GM10248 (cell line): ENCODE measurements at regions of chr5 and their contacts with region 1.

Region 1: DNA sequence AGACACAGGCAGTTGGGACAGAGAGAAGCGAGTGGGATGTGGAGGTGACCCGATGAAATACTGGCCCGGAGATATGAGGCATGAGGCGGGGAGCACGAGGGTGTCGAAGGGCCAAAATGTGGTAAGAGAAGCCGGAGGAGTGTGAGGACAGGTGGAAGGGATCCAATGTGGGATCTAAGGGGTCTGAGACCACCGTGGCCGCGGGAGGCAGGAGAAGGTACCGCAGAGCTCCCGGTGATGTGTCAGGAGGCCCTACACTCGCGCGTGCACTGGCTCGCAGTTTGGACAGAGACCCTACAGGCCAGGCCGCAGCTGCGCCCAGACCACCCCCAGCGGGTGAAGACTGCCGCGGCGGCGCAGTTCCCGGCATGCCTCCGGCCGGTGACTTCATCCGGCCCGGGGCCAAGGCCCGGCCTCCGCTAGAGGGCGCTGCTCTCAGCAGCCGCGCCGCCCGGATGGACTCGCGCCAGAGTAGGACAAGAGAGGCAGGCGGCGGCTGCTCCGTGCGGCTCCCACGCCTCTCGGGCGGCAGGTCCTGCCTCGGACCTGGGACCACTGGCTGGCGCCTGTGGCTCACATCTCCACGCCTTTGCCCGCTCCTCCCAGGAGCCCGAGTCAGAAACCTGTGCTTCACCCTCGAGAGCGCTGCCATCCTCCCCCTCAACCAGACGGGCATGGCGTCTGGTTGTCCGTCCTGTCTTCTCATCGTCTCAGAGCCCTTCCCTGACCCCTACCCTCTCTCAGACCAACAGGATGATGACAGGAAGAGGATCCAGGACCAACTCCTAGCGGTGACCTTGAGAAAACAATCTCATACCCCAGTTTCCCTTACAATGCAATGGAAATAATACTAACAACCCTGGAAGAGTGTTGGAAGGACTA is 35.4 kb upstream of the STING1 start:
- DNase-seq: peak; percentile 95
- CTCF ChIP-seq: peak; percentile 97

Region 2: DNA sequence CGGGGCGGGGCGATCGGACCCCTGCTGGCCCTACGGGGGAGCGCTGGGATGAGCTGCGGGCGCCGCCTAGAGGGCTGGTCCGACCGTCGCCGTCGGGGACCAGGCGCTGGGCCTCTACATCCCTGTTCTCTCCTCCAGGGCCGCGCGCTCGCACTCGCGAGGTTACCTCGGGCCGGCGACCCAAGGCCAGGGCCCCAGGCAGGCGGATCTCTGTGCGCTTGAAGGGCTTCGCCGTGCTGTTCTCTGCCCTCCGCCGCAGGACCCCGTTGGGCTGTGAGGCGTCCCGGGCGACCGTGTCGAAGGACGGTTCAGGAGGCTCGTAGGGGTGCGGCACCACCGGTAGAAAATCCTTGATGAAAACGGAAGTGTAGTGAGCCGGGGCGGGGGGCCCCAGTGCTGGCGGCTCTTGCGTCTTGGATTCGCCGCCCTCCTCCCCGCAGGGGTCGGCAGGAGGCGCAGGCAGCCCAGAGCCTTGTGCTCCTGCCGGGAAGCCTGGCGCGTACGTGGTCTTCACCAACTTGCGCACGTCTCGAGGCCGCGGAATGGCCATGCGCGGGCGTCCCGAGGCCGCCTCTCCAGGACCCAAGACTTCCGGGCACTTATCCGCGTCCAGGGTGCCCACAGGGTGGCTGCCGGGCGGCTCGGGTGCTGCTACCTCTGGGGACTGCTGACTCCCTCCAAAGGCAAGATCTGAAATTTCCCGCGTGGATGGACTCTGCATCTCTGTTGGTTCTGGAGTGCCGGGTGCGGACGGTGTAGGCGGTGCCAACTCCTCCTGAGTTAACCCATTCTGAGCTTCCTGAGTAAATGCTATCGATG is 125.0 kb before region 1 on chr5:
- CTCF ChIA-PET with region 1: interaction called, 10 read pairs
- POLR2A ChIA-PET with region 1: no interaction called
- DNase-seq: peak; percentile 88
- CTCF ChIP-seq: peak; percentile 94

Region 3: DNA sequence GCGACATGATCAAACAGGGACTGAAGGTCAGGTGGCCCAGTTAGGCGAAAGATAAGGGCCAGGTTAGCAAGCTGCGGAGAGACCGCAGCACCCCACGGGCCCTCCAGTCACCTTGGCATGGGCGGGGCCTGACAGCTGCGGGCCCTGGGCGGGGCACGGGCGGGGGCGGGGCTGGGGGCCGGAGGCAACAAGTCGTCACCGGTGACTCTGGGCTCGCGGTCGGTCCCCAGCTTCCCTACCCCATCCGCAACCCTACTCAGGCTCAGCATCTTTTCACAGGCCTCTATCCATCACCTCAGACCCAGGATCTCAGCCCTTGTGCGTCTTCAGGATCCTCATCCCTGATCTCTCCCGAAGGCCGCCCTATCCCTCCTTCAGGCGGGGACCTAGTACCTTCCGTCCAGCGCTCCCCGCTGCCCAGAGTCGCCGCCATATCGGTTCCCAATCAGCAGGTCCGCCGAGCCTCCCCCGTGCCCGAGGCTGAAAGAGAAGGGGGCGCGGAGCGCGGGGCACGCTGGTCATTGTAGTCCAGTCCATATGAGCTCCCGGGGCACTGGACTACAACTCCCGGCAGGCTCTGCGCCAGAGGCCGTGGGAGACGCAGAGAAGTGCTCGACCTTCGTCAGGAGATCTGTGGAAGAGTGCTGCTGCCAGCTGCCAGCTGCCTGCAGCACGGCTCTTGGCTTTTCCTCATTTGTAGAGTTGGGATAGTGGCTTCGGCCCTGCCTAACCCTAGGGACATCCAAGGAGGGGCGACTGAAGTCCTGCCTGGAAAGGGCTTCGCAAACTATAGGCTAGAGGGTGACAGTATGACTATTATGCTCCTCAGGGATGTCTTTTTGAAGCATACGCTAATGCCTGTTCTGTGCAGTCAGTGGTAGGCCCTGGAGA is 78.7 kb before region 1 on chr5 and contains the start of gene DNAJC18:
- CTCF ChIA-PET with region 1: interaction called, 49 read pairs
- POLR2A ChIA-PET with region 1: no interaction called
- DNase-seq: peak; percentile 94
- CTCF ChIP-seq: no peak

Region 4: GRCh38 chr5:139482050-139482889 is 35.7 kb before region 1 on chr5 and contains the start of gene STING1:
- CTCF ChIA-PET with region 1: interaction called, 25 read pairs
- POLR2A ChIA-PET with region 1: no interaction called
- DNase-seq: peak; percentile 66
- CTCF ChIP-seq: no peak

Region 5: GRCh38 chr5:139501381-139501780 is 16.5 kb before region 1 on chr5:
- CTCF ChIA-PET with region 1: interaction called, 30 read pairs
- POLR2A ChIA-PET with region 1: no interaction called
- DNase-seq: no peak
- CTCF ChIP-seq: no peak

Region 6: DNA sequence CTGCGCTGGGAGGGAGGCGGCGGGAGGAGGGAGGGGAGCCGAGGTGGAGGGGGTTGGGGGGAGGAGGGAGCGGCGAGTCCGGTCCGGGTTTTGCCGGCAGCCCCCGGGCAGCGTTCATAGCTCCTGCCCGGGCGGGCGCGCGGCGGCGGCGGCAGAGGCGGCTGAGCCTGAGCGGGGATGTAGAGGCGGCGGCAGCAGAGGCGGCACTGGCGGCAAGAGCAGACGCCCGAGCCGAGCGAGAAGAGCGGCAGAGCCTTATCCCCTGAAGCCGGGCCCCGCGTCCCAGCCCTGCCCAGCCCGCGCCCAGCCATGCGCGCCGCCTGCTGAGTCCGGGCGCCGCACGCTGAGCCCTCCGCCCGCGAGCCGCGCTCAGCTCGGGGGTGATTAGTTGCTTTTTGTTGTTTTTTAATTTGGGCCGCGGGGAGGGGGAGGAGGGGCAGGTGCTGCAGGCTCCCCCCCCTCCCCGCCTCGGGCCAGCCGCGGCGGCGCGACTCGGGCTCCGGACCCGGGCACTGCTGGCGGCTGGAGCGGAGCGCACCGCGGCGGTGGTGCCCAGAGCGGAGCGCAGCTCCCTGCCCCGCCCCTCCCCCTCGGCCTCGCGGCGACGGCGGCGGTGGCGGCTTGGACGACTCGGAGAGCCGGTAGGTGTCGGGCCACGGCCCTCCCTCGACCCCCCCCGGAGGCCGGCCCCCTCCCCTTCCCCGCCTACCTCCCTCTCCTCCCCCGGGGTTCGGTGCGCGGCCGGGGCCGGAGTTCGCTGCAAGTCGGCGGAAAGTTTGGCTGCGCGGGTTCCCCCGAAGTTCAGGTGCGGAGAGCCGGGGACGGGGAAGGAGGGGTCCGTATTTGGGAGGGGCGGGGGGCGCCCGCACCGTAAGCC is 130.5 kb after region 1 on chr5 and contains the start of gene CXXC5:
- CTCF ChIA-PET with region 1: no interaction called
- POLR2A ChIA-PET with region 1: no interaction called
- DNase-seq: peak; percentile 85
- CTCF ChIP-seq: no peak

Region 7: GRCh38 chr5:139772089-139772791 is 254.3 kb after region 1 on chr5:
- CTCF ChIA-PET with region 1: no interaction called
- POLR2A ChIA-PET with region 1: no interaction called
- DNase-seq: no peak
- CTCF ChIP-seq: no peak

Region 8: DNA sequence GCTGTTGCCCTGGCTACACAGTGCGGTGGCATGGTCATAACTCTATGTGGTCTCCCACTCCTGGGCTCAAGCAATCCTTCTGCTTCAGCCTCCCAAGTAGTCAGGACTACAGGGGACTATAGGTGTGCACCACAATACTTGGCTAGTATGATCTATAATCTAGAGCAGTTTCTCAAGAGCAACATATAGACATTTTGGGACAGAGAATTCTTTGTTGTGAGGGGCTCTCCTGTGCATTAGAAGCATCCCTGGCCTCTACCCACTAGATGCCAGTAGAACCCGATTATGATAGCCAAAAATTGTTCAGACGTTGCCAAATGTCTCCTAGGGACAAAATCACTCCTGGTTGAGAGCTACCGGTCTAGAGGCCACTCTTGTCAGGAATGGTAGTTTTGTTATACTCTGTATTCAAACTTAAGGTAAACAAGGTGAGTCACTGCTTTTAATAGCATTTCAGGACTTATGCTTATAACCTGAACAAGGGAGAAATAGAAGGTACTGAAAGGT is 890.9 kb after region 1 on chr5:
- CTCF ChIA-PET with region 1: no interaction called
- POLR2A ChIA-PET with region 1: no interaction called
- DNase-seq: no peak
- CTCF ChIP-seq: no peak